ENCODE measurements at regions of chr2 and their contacts with region 1.

Region 1: DNA sequence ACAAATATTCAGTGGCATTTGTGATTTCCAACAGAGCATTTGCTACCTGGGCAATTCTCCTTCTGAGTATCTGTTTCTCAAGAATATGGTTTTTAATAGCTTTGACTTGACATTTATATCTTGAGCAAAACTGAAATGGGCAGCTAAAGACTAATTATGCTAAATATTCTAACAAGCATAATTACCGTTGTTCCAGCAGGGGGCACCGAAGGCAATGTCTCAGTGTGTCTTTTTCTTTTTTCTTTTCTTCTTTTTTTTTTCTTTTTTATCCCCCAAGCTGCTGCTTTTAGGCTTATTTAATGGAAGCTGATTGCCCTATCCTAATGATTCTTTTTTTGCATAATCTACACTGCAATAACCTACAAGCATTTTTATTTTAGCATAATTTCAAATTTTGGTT is 138.9 kb upstream of the NABP1 start:
- DNase-seq: no peak
- H3K4me3 ChIP-seq: no peak overlapping the region
- H3K27ac ChIP-seq: no peak overlapping the region
- H3K4me1 ChIP-seq: peaks cover 3 to 12% (median 6%) of the 10 kb centered on the region in 4 experiments; a peak in 4 of 7 replicates
- H3K27me3 ChIP-seq: no peaks in the 10 kb centered on the region
- CTCF ChIP-seq: peak in 2 of 3 experiments; percentile 29 to 54; a peak in 2 of 4 replicates
- EP300 ChIP-seq: no peak
- POLR2A ChIP-seq: no peak
- RAD21 ChIP-seq: peak; percentile 24 to 35; a peak in 3 of 4 replicates

Region 2: DNA sequence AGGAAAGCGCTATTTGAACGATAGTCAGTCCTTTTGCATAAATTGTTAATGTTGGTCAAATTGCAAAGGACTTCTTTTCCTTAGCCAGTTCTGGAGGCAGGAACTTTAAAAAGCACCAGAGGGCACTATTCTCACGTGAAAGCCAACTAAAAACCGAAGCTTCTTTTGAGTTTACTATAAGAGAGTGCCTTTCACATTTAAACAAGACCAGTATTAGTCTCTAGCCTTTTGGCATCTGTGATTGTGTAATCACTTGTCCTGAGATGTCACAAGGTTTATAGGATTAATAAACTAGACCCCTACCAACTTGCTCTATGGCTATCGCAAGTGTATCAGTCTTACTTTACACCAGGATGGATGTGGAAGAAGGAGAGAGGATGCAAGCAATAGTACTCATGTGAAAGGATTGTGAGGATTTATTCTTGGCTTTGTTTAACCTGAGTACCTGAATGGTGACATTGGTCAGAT is 373.9 kb before region 1 on chr2:
- CTCF ChIA-PET with region 1: interaction called, 12 read pairs
- POLR2A ChIA-PET with region 1: no interaction called
- DNase-seq: no peak
- H3K4me3 ChIP-seq: no peak overlapping the region
- H3K27ac ChIP-seq: no peak overlapping the region
- H3K4me1 ChIP-seq: no peaks in the 10 kb centered on the region
- H3K27me3 ChIP-seq: no peaks in the 10 kb centered on the region
- CTCF ChIP-seq: peak in 2 of 3 experiments; percentile 60; a peak in 3 of 4 replicates
- EP300 ChIP-seq: no peak
- POLR2A ChIP-seq: no peak
- RAD21 ChIP-seq: peak; percentile 85 to 87

Region 3: GRCh38 chr2:191521608-191522208 is 17.4 kb before region 1 on chr2:
- CTCF ChIA-PET with region 1: interaction called, 16 read pairs
- POLR2A ChIA-PET with region 1: no interaction called
- DNase-seq: no peak
- H3K4me3 ChIP-seq: no peak overlapping the region
- H3K27ac ChIP-seq: no peak overlapping the region
- H3K4me1 ChIP-seq: no peaks in the 10 kb centered on the region
- H3K27me3 ChIP-seq: no peaks in the 10 kb centered on the region
- CTCF ChIP-seq: peak in 1 of 3 experiments; percentile 43; a peak in 2 of 4 replicates
- EP300 ChIP-seq: no peak
- POLR2A ChIP-seq: no peak
- RAD21 ChIP-seq: peak in 1 of 2 experiments; percentile 68

Region 4: DNA sequence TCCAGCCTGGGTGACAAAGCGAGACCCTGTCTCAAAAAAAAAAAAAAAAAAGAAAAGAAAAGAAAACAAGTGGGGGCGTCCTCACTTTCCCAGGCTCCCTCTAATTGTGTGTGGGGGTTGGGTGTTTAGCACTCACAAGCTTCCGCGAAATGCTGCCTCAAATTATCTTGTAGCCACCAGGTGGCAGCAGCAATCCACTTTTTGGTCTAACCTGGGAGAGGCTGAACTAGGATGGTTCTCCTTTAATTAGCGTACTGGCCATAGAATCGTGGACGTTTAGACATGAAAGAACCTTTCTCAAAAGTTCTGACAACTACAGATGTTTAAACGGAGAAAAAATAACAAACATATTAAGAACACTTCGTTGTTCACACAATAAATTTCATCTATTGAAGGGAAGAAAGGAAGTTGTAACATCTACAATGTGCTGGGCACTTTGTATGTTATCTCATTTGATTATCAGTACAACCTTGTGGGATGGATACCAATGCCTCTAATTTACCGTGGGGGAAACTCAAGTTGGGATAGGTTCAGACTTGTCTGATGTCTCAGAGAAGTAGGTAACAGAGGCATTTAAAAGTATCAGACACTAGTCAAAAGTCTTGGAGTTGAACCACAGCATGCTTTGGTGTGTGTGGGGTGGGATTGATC is 16.1 kb after region 1 on chr2:
- CTCF ChIA-PET with region 1: interaction called, 91 read pairs
- POLR2A ChIA-PET with region 1: no interaction called
- DNase-seq: peak; percentile 44 to 91
- H3K4me3 ChIP-seq: no peak overlapping the region
- H3K27ac ChIP-seq: no peak overlapping the region
- H3K4me1 ChIP-seq: no peaks in the 10 kb centered on the region
- H3K27me3 ChIP-seq: no peaks in the 10 kb centered on the region
- CTCF ChIP-seq: peak; percentile 61 to 78 (median 78)
- EP300 ChIP-seq: no peak
- POLR2A ChIP-seq: no peak
- RAD21 ChIP-seq: peak; percentile 88 to 90

Region 5: DNA sequence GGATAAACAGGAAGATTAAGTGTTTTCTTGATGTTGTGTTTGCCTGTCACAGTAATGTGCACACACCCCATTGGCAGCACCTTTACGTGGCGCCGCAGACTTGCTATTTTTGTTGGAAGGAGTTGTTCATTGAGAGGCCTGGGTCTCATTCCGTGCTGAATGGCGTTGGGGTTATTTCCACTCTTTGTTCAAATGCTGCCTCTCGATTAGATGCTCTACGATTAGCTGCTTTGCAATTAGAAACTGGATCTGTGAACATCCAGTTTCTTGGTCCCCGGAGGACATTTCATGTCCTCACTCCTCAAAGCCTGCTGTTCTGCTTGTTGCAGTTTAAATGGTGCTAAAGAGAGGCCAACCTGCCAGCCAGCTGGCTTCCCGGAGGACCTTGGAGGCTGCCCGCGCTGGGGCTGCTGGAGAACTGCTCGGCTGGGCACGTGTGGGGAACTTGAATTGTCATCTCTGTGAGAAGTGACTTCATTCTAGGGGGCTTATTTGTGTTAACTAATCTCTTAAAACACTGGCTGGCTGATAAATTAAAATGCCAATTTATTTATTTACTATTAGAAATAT is 21.4 kb after region 1 on chr2:
- CTCF ChIA-PET with region 1: interaction called, 91 read pairs
- POLR2A ChIA-PET with region 1: no interaction called
- DNase-seq: no peak
- H3K4me3 ChIP-seq: no peak overlapping the region
- H3K27ac ChIP-seq: no peak overlapping the region
- H3K4me1 ChIP-seq: no peaks in the 10 kb centered on the region
- H3K27me3 ChIP-seq: no peaks in the 10 kb centered on the region
- CTCF ChIP-seq: no peak
- EP300 ChIP-seq: no peak
- POLR2A ChIP-seq: no peak
- RAD21 ChIP-seq: no peak

Measured in H1 (cell line).